Dorsolateral prefrontal cortex (tissue), 120 donors: ENCODE measurements at regions of chr14 and their contacts with region 1.

Region 1: DNA sequence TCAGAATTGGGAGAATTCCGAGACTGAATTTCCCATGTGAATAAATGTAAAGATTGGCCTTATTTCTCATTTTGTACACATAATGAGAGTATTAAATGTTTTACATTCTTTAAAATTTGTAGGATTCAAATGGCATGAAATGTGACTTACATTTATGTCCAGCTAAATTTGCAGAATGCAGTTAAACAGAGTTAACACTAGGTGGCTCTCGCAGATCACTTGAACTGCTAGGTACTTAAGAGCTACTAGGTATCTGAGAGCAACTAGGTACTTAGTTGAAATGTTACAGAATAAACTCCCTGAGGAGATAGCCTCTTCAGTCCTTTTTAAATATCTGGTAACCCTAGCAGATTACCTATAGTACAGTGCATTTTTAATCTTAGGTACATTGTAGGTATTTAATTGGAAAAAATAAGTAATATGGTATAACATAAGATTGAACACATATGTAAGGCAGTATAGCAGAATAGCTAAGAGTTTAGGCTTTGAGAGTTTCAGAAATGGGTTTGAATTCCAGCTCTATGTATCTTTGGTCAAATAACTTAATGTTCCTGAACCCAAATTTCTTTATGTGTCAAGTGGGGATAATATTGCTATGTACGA is 73.8 kb downstream of the KIAA0586 start:
- DNase-seq: peak in 2 of 10 donors; percentile 26 to 41
- H3K4me3 ChIP-seq: no peak overlapping the region
- H3K27ac ChIP-seq: no peak overlapping the region
- H3K27me3 ChIP-seq: no peaks in the 10 kb centered on the region
- CTCF ChIP-seq: peak; percentile 70 to 97 (median 84)

Region 2: DNA sequence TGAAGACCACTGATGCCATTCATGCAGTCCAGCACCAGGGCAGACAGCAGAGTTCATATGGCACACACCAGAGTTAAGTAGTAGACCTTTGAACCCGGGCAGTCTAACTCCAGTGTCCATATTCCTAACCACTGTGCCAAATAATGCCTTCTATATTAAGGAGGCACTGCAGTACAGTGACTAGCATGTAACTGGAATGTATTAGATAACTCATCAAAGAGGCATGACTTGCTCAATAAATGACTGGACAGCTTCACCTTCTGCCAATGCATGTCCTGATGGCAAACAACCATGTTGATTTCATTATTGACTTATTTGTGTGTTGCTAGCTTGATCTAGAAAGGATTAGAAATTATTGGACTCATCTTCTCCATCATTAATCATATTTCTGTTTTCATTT is 176.7 kb after region 1 on chr14:
- intact Hi-C with region 1: no loop called
- DNase-seq: no peak
- H3K4me3 ChIP-seq: no peak overlapping the region
- H3K27ac ChIP-seq: no peak overlapping the region
- H3K27me3 ChIP-seq: no peaks in the 10 kb centered on the region
- CTCF ChIP-seq: no peak

Region 3: DNA sequence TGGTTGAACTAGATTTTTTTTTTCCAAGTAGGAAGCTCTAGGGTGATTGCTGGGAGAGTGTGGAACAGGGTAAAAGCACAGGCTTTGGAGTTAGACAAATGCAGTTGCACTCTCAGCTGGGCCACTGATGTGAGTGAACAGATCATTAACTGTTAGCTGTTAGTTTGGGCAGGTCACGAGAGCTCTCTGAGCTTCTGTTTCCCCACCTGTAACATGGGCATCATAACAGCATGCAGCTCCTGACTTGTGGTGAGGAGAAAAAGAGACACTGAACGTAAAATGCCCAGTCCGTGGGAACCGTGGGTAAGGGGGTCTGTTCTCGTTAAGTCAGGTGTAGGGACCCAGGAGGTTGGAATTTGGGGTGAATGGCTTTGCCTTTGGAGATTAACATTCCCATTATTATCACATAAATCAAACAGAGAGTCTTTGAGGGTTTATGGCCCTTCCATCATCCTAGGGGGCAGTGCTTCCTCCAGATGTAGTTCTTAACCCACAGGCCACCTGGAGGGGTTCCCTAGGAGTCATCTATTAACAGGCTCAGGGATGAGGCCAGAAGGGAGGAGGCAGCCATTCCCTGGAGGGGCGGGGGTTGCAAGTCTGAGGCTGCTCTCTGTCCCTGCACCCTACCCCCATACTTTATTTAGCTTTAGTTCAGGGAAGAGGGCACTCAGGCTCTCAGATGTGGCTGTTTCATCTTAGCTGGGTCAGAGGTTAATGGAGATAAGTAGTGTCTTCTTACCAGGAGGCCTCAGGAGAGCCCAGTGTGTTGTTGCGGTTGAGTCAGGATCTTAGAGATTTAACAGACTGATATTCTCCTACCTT is 271.7 kb after region 1 on chr14:
- intact Hi-C with region 1: no loop called
- DNase-seq: no peak
- H3K4me3 ChIP-seq: no peak overlapping the region
- H3K27ac ChIP-seq: peak overlapping the region in 2 of 59 donors; percentile 38 to 74
- H3K27me3 ChIP-seq: no peaks in the 10 kb centered on the region
- CTCF ChIP-seq: no peak

Region 4: GRCh38 chr14:58826845-58827686 is 325.8 kb after region 1 on chr14:
- intact Hi-C with region 1: loop called in 1 of 2 experiments (anchors 5 kb)
- DNase-seq: no peak
- H3K4me3 ChIP-seq: no peak overlapping the region
- H3K27ac ChIP-seq: no peak overlapping the region
- H3K27me3 ChIP-seq: no peaks in the 10 kb centered on the region
- CTCF ChIP-seq: peak in 33 of 56 donors; percentile 3 to 52 (median 24)

Region 5: GRCh38 chr14:59055439-59056045 is 554.2 kb after region 1 on chr14:
- intact Hi-C with region 1: loop called in 1 of 2 experiments (anchors 2 kb)
- DNase-seq: peak in 3 of 10 donors; percentile 10 to 59 (median 47)
- H3K4me3 ChIP-seq: no peak overlapping the region
- H3K27ac ChIP-seq: no peak overlapping the region
- H3K27me3 ChIP-seq: peaks cover 0 to 3% (median 0%) of the 10 kb centered on the region in 45 donors
- CTCF ChIP-seq: peak; percentile 28 to 95 (median 78)